HEK293 (cell line): ENCODE measurements at regions of chr10 and their contacts with region 1.

Region 1: GRCh38 chr10:115417585-115418265 is 324.6 kb downstream of the ATRNL1 start:
- H3K4me3 ChIP-seq: no peak overlapping the region
- H3K27ac ChIP-seq: no peak overlapping the region
- H3K4me1 ChIP-seq: no peaks in the 10 kb centered on the region
- CTCF ChIP-seq: peak; percentile 38; the same call in 1 of the 2 replicates

Region 2: GRCh38 chr10:115141254-115141653 is 276.5 kb before region 1 on chr10:
- CTCF ChIA-PET with region 1: interaction called, 17 read pairs
- POLR2A ChIA-PET with region 1: no interaction called
- H3K4me3 ChIP-seq: no peak overlapping the region
- H3K27ac ChIP-seq: no peak overlapping the region
- H3K4me1 ChIP-seq: no peaks in the 10 kb centered on the region
- CTCF ChIP-seq: no peak